ENCODE measurements at regions of chr4 and their contacts with region 1.

Region 1: GRCh38 chr4:38759113-38759789 is 23.5 kb downstream of the TLR10 start:
- DNase-seq: peak; percentile 84
- ATAC-seq: no peak
- H3K4me3 ChIP-seq: no peak overlapping the region
- H3K4me3 Mint-ChIP-seq: peak overlapping the region; percentile 26
- H3K27ac ChIP-seq: peak overlapping the region; percentile 6 to 11
- H3K27ac Mint-ChIP-seq: peak overlapping the region; percentile 83
- H3K4me1 ChIP-seq: peaks cover 59 to 70% of the 10 kb centered on the region in 2 donors
- H3K4me1 Mint-ChIP-seq: peaks cover 57% of the 10 kb centered on the region
- H3K27me3 ChIP-seq: no peaks in the 10 kb centered on the region
- H3K27me3 Mint-ChIP-seq: no peaks in the 10 kb centered on the region
- CTCF ChIP-seq: peak; percentile 78

Region 2: GRCh38 chr4:38179690-38180377 is 579.4 kb before region 1 on chr4:
- CTCF ChIA-PET with region 1: interaction called, 45 read pairs
- POLR2A ChIA-PET with region 1: no interaction called
- intact Hi-C with region 1: no loop called
- DNase-seq: peak; percentile 79
- ATAC-seq: peak; percentile 80
- H3K4me3 ChIP-seq: no peak overlapping the region
- H3K4me3 Mint-ChIP-seq: no peak overlapping the region
- H3K27ac ChIP-seq: no peak overlapping the region
- H3K27ac Mint-ChIP-seq: no peak overlapping the region
- H3K4me1 ChIP-seq: peaks cover 24 to 31% of the 10 kb centered on the region in 2 donors
- H3K4me1 Mint-ChIP-seq: peaks cover 29% of the 10 kb centered on the region
- H3K27me3 ChIP-seq: peaks cover 0 to 6% (median 1%) of the 10 kb centered on the region in 4 experiments
- H3K27me3 Mint-ChIP-seq: peaks cover 6% of the 10 kb centered on the region
- CTCF ChIP-seq: peak; percentile 99

Region 3: GRCh38 chr4:38782452-38783108 is 23.3 kb after region 1 on chr4 and contains the start of gene TLR10:
- CTCF ChIA-PET with region 1: interaction called, 620 read pairs
- POLR2A ChIA-PET with region 1: interaction called, 110 read pairs
- intact Hi-C with region 1: loop called (anchors 1 kb)
- DNase-seq: peak; percentile 88
- ATAC-seq: peak; percentile 90
- H3K4me3 ChIP-seq: peak within 1 kb of the TSS; percentile 50 to 92 (median 72)
- H3K4me3 Mint-ChIP-seq: peak within 1 kb of the TSS; percentile 95
- H3K27ac ChIP-seq: peak within 1 kb of the TSS; percentile 78 to 83
- H3K27ac Mint-ChIP-seq: peak within 1 kb of the TSS; percentile 96
- H3K4me1 ChIP-seq: peaks cover 34 to 51% of the 10 kb centered on the region in 2 donors
- H3K4me1 Mint-ChIP-seq: peaks cover 57% of the 10 kb centered on the region
- H3K27me3 ChIP-seq: no peaks in the 10 kb centered on the region
- H3K27me3 Mint-ChIP-seq: no peaks in the 10 kb centered on the region
- CTCF ChIP-seq: peak; percentile 83
- total RNA-seq, gene TLR10: 51.5 and 53.4 TPM in 2 replicates

Region 4: GRCh38 chr4:38856524-38857337 is 97.5 kb after region 1 on chr4 and contains the start of gene TLR6:
- CTCF ChIA-PET with region 1: interaction called, 170 read pairs
- POLR2A ChIA-PET with region 1: interaction called, 15 read pairs
- intact Hi-C with region 1: loop called (anchors 1 kb)
- DNase-seq: peak; percentile 87
- ATAC-seq: peak; percentile 56
- H3K4me3 ChIP-seq: peak within 1 kb of the TSS; percentile 51 to 78 (median 70)
- H3K4me3 Mint-ChIP-seq: peak within 1 kb of the TSS; percentile 93
- H3K27ac ChIP-seq: peak within 1 kb of the TSS; percentile 73 to 77
- H3K27ac Mint-ChIP-seq: peak within 1 kb of the TSS; percentile 94
- H3K4me1 ChIP-seq: peaks cover 39 to 43% of the 10 kb centered on the region in 2 donors
- H3K4me1 Mint-ChIP-seq: peaks cover 52% of the 10 kb centered on the region
- H3K27me3 ChIP-seq: no peaks in the 10 kb centered on the region
- H3K27me3 Mint-ChIP-seq: no peaks in the 10 kb centered on the region
- CTCF ChIP-seq: peak; percentile 87
- total RNA-seq, gene TLR6: 54.4 and 60.6 TPM in 2 replicates

Region 5: GRCh38 chr4:38894340-38894982 is 135.2 kb after region 1 on chr4:
- CTCF ChIA-PET with region 1: interaction called, 20 read pairs
- POLR2A ChIA-PET with region 1: no interaction called
- intact Hi-C with region 1: no loop called
- DNase-seq: no peak
- ATAC-seq: no peak
- H3K4me3 ChIP-seq: no peak overlapping the region
- H3K4me3 Mint-ChIP-seq: no peak overlapping the region
- H3K27ac ChIP-seq: no peak overlapping the region
- H3K27ac Mint-ChIP-seq: no peak overlapping the region
- H3K4me1 ChIP-seq: no peaks in the 10 kb centered on the region
- H3K4me1 Mint-ChIP-seq: peaks cover under 1% of the 10 kb centered on the region
- H3K27me3 ChIP-seq: no peaks in the 10 kb centered on the region
- H3K27me3 Mint-ChIP-seq: no peaks in the 10 kb centered on the region
- CTCF ChIP-seq: no peak

Region 6: GRCh38 chr4:39134683-39135319 is 375.6 kb after region 1 on chr4:
- CTCF ChIA-PET with region 1: interaction called, 59 read pairs
- POLR2A ChIA-PET with region 1: no interaction called
- intact Hi-C with region 1: loop called (anchors 1 kb)
- DNase-seq: no peak
- ATAC-seq: no peak
- H3K4me3 ChIP-seq: no peak overlapping the region
- H3K4me3 Mint-ChIP-seq: no peak overlapping the region
- H3K27ac ChIP-seq: no peak overlapping the region
- H3K27ac Mint-ChIP-seq: peak overlapping the region; percentile 54
- H3K4me1 ChIP-seq: peaks cover 6 to 12% of the 10 kb centered on the region in 2 donors
- H3K4me1 Mint-ChIP-seq: peaks cover 14% of the 10 kb centered on the region
- H3K27me3 ChIP-seq: no peaks in the 10 kb centered on the region
- H3K27me3 Mint-ChIP-seq: no peaks in the 10 kb centered on the region
- CTCF ChIP-seq: no peak

Measured in B cell (primary cell).